GM12878 (cell line): ENCODE measurements at regions of chr7 and their contacts with region 1.

Region 1: GRCh38 chr7:46695051-46695707 is 774.1 kb upstream of the IGFBP3 start:
- DNase-seq: no peak
- ATAC-seq: peak; percentile 62
- H3K4me3 ChIP-seq: no peak overlapping the region
- H3K27ac ChIP-seq: no peak overlapping the region
- H3K4me1 ChIP-seq: no peaks in the 10 kb centered on the region
- H3K27me3 ChIP-seq: no peaks in the 10 kb centered on the region
- CTCF ChIP-seq: no peak
- EP300 ChIP-seq: no peak
- POLR2A ChIP-seq: no peak
- RAD21 ChIP-seq: no peak

Region 2: GRCh38 chr7:46705406-46706255 is 10.5 kb after region 1 on chr7:
- CTCF ChIA-PET with region 1: interaction called, 6 read pairs
- POLR2A ChIA-PET with region 1: interaction called, 3 read pairs
- RAD21 ChIA-PET with region 1: no interaction called
- SMC1A ChIA-PET with region 1: interaction called, 10 read pairs
- in situ Hi-C with region 1: no loop called
- intact Hi-C with region 1: no loop called
- DNase-seq: no peak
- ATAC-seq: no peak
- H3K4me3 ChIP-seq: no peak overlapping the region
- H3K27ac ChIP-seq: no peak overlapping the region
- H3K4me1 ChIP-seq: no peaks in the 10 kb centered on the region
- H3K27me3 ChIP-seq: no peaks in the 10 kb centered on the region
- CTCF ChIP-seq: no peak
- EP300 ChIP-seq: no peak
- POLR2A ChIP-seq: no peak
- RAD21 ChIP-seq: no peak

Region 3: DNA sequence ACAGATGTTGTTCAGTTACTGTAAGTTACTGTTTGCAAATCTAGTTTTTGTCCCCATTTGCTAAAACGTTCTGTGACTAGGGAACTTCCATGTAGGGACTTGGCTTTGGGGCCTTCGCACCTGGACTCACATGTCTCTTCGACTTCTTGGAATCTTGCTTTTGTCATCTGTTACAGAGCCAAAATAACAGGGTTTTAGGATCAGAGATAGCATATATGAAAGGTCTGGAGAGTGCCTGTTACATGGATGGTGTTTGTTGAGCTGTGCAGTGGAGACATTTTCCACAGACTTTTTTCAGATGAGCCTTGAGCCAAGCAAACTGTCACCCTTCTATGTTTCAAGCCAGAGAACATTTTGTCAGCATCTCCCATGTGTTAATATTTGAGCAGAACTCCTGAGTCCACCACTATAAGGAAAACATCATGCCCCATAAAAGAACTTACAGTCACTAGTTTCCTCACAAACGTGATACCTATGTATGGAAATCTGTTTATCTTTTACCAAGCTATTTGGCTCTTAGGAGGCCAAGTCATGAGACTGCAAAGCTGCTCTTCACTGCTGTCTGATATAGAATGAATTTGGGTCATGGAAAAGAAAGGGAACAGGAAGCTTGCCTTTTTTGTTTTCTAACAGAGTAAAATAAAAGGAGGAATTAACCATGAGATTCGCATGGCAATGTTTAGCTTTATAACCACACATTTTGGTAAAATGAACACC is 44.5 kb after region 1 on chr7:
- CTCF ChIA-PET with region 1: interaction called, 3 read pairs
- POLR2A ChIA-PET with region 1: no interaction called
- RAD21 ChIA-PET with region 1: interaction called, 5 read pairs
- SMC1A ChIA-PET with region 1: interaction called, 10 read pairs
- in situ Hi-C with region 1: no loop called
- intact Hi-C with region 1: no loop called
- DNase-seq: no peak
- ATAC-seq: no peak
- H3K4me3 ChIP-seq: no peak overlapping the region
- H3K27ac ChIP-seq: no peak overlapping the region
- H3K4me1 ChIP-seq: no peaks in the 10 kb centered on the region
- H3K27me3 ChIP-seq: no peaks in the 10 kb centered on the region
- CTCF ChIP-seq: no peak
- EP300 ChIP-seq: no peak
- POLR2A ChIP-seq: no peak
- RAD21 ChIP-seq: no peak

Region 4: DNA sequence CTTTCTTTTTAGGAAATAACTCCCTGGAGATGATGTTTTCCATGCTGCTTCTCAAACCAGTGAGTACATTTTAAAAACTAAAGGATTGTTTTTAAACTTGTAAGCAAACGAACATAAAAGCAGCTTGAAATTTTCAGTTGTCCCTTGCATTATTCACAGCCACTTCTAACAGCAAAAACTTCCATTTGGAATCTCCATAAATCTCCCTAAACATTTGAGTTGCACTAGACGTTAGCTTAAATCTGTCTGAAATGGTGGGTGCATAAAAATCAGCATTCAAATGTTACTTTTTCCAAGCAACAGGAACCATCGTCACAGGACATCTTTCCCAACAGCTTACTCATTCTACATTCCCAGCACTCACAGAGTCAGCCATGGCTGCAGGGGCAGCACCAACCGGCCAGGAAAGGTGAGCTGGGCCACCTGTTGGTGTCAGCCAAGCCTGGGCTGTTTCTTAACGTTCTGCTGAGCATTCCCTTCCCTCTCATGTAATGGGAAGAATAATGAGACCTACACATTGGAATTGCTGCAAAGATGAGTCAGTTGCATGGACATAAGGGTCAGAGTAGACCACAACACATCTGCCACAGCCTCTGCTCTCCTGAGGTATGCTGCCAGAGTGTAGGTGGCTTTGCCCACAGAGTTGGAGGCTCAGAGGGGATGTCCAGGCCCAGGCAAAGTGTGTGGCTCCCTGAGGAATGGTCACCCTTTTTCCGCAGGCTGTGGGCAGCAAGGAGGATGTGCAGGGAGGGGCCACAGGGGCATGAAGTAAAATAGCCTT is 723.6 kb after region 1 on chr7:
- CTCF ChIA-PET with region 1: no interaction called
- POLR2A ChIA-PET with region 1: no interaction called
- RAD21 ChIA-PET with region 1: no interaction called
- SMC1A ChIA-PET with region 1: no interaction called
- in situ Hi-C with region 1: no loop called
- intact Hi-C with region 1: no loop called
- DNase-seq: no peak
- ATAC-seq: no peak
- H3K4me3 ChIP-seq: no peak overlapping the region
- H3K27ac ChIP-seq: no peak overlapping the region
- H3K4me1 ChIP-seq: no peaks in the 10 kb centered on the region
- H3K27me3 ChIP-seq: no peaks in the 10 kb centered on the region
- CTCF ChIP-seq: no peak
- EP300 ChIP-seq: no peak
- POLR2A ChIP-seq: no peak
- RAD21 ChIP-seq: no peak